ENCODE measurements at regions of chr4 and their contacts with region 1.

Region 1: GRCh38 chr4:164931551-164932324 is 45.7 kb downstream of the TRIM61 start:
- DNase-seq: peak; percentile 32
- H3K4me3 Mint-ChIP-seq: no peak overlapping the region
- H3K27ac Mint-ChIP-seq: peak overlapping the region; percentile 40
- H3K4me1 Mint-ChIP-seq: peaks cover 7% of the 10 kb centered on the region
- H3K27me3 Mint-ChIP-seq: no peaks in the 10 kb centered on the region
- CTCF ChIP-seq: no peak

Region 2: DNA sequence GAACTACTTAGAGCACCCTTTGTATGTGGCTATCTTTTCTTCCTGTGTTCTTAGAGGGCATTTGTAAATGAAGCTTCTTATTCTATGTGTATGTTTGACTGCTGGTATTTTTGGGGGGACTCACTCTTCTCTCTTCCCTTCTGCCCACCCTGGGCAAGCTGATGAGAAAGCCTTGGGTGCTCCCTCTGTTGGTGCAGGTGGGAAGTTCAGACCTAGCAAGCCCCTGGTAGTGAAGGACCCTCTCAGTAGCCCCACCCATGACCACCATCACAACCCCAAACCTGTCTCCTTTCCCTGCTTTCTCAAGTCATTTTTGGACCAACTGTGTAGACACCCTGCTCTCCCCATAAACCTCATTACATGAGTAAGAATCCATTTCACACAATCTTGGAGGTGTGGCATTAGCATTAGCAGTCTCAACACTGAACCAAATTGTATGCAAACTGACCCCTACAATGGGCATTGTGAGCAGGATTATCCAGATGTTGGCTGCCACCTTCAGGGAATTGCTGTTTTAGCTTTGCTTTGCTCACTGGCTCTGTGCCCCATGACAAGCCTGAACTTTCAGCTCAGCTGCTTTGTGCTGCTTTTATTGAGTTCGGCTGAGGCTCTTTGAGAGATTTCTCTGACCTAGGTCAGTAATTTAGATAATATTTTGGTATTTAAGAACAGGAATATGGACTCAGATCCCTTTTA is 17.9 kb after region 1 on chr4:
- CTCF ChIA-PET with region 1: interaction called, 72 read pairs
- POLR2A ChIA-PET with region 1: interaction called, 4 read pairs
- intact Hi-C with region 1: no loop called
- DNase-seq: no peak
- H3K4me3 Mint-ChIP-seq: no peak overlapping the region
- H3K27ac Mint-ChIP-seq: no peak overlapping the region
- H3K4me1 Mint-ChIP-seq: no peaks in the 10 kb centered on the region
- H3K27me3 Mint-ChIP-seq: no peaks in the 10 kb centered on the region
- CTCF ChIP-seq: peak; percentile 32

Measured in MCF 10A (cell line).